ENCODE measurements at regions of chr10 and their contacts with region 1.

Region 1: GRCh38 chr10:132023092-132023811 is 41.5 kb upstream of the BNIP3 start:
- DNase-seq: peak; percentile 67 to 93 (median 87)

Region 2: DNA sequence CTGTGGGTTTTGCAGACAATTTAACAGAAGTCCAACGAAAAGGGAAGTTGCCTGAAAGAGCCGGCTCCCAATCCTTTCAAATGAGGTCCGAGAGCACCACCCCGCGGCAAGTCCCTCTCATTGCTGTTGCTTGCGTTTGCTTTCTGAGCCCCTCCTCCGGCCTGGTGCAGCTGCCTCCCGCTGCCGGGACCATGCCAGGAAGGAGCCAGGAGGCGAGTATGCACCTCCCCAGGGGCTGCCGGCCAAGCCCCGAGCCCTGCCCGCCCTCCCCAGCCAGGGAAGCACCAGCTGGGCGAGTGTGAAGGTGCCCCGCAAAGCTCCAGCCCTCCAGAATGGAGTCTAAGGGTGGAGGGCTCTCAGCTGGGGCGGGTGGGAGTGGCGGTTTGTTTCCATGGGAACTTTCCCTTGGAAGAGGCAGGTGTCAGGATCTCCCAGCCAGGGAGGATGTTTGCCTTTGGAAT is 148.2 kb before region 1 on chr10:
- intact Hi-C with region 1: no loop called
- DNase-seq: peak; percentile 71 to 92 (median 84)

Region 3: DNA sequence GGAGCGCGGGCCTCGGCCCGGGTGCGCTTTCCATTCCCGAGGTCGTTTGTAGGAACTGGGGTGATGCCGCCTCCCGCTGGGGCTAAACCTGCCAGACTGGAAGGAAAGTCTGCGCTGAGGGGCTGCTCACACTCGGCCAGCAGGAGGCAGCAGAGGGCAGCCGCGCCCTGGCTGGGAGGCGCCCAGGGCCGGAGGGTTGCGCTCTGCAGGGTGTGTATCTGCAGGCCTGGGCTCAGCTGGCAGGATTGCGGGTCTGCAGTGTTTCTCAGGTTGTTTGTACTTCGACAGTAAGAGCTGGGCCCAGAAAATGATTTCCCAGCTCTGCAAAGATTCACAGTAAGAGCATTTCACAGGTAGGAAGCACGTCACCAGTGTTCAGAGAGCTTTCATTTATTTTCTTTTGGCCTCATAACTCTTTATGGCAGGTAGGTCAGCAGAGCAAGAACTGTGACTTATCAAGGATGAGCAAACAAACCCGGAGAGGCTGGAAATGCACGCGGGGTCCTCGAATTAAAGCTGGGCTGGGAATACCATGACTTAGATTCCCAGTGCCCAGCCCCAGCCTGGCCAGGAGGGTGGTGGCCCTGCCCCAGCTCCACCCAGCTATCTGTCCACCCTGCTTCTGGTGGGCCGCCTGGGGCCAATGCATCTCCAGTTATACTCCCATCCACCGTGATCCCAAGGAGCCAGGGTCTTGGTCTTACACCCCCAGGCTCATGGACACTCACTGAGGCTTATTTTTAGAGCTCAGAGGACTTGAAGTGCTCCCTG is 137.7 kb before region 1 on chr10:
- intact Hi-C with region 1: loop called (anchors 5 kb)
- DNase-seq: peak in 40 of 42 donors; percentile 34 to 87 (median 67)

Region 4: DNA sequence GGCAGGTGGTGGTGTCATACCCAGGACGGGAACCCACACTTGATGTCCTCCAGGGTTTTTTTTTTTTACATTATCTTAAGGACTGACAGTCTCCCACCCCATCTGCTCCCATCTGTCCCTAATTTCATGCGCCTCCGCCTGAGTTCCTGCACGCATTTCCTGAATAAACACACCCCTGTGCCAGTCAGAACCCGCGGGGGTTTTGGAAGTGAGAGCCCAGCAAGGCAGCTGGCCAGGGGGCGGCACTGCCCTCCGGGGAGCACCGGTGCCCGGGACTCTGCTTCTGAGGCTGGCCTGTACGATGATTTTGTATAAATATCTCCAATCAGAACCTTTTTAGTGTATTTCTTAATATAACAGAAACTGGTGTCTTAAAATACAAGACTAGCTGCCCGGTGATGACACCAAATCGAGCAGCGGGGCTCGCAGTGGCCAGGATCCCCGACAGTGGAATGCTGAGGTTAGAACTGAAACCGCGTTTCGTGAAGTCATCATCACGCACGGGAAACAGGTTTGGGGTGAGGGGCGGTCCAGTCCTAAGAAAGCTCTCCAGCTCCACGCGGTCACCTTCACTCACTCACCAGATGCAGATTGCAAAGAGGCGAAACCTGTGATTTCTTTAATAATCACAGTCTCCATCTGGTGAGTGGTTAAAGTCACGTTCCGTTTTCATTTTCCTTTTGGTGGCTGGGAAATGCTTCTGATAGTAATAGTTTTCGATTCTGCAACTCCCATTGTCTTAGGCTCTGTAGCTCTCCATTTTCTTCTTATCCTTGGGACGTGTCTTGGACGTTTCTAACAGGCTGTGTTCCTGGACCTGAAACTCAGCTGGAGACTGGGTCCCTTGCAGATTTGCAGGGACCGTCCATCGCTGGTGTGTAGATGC is 61.2 kb before region 1 on chr10:
- intact Hi-C with region 1: loop called (anchors 10 kb)
- DNase-seq: peak in 12 of 42 donors; percentile 24 to 56 (median 44)